ENCODE measurements at regions of chr12 and their contacts with region 1.

Region 1: GRCh38 chr12:54032627-54033100 is at the start of gene HOXC5:
- DNase-seq: peak; percentile 54
- ATAC-seq: peak; percentile 53
- H3K4me3 ChIP-seq: peak within 1 kb of the TSS; percentile 55 to 77
- H3K27ac ChIP-seq: peak within 1 kb of the TSS; percentile 35
- H3K4me1 ChIP-seq: peaks cover 7 to 29% of the 10 kb centered on the region in 2 experiments
- H3K27me3 ChIP-seq: no peaks in the 10 kb centered on the region
- CTCF ChIP-seq: peak; percentile 88 to 98 (median 94)
- POLR2A ChIP-seq: no peak
- RAD21 ChIP-seq: peak; percentile 88
- total RNA-seq, gene HOXC5: 1.1 TPM

Region 2: GRCh38 chr12:54017878-54018467 is 14.7 kb before region 1 on chr12:
- CTCF ChIA-PET with region 1: interaction called, 43 read pairs
- POLR2A ChIA-PET with region 1: interaction called, 3 read pairs
- RAD21 ChIA-PET with region 1: interaction called in 1 of 2 experiments, 3 read pairs
- intact Hi-C with region 1: no loop called
- DNase-seq: peak; percentile 84
- ATAC-seq: peak; percentile 80
- H3K4me3 ChIP-seq: peak overlapping the region; percentile 76 to 88
- H3K27ac ChIP-seq: peak overlapping the region; percentile 94
- H3K4me1 ChIP-seq: peaks cover 24 to 44% of the 10 kb centered on the region in 2 experiments
- H3K27me3 ChIP-seq: no peaks in the 10 kb centered on the region
- CTCF ChIP-seq: no peak
- POLR2A ChIP-seq: peak; percentile 56
- RAD21 ChIP-seq: no peak

Region 3: GRCh38 chr12:54134850-54135249 is 102.2 kb after region 1 on chr12:
- CTCF ChIA-PET with region 1: interaction called, 21 read pairs
- POLR2A ChIA-PET with region 1: no interaction called
- RAD21 ChIA-PET with region 1: interaction called, 9 to 12 read pairs
- intact Hi-C with region 1: loop called (anchors 5 kb)
- DNase-seq: no peak
- ATAC-seq: peak; percentile 59; the same call in 1 of the 2 replicates
- H3K4me3 ChIP-seq: no peak overlapping the region
- H3K27ac ChIP-seq: no peak overlapping the region
- H3K4me1 ChIP-seq: peaks cover 4 to 5% of the 10 kb centered on the region in 2 experiments; a peak in 1 of 4 replicates
- H3K27me3 ChIP-seq: no peaks in the 10 kb centered on the region; the same call in 1 of the 2 replicates
- CTCF ChIP-seq: peak; percentile 26 to 37 (median 28); a peak in 5 of 6 replicates
- POLR2A ChIP-seq: no peak
- RAD21 ChIP-seq: peak; percentile 49

Region 4: GRCh38 chr12:54191550-54192022 is 158.9 kb after region 1 on chr12:
- CTCF ChIA-PET with region 1: interaction called, 38 read pairs
- POLR2A ChIA-PET with region 1: no interaction called
- RAD21 ChIA-PET with region 1: interaction called, 9 read pairs
- intact Hi-C with region 1: no loop called
- DNase-seq: peak; percentile 77
- ATAC-seq: peak; percentile 71
- H3K4me3 ChIP-seq: no peak overlapping the region
- H3K27ac ChIP-seq: no peak overlapping the region
- H3K4me1 ChIP-seq: peaks cover 5 to 33% of the 10 kb centered on the region in 2 experiments
- H3K27me3 ChIP-seq: no peaks in the 10 kb centered on the region
- CTCF ChIP-seq: peak; percentile 80 to 92 (median 90)
- POLR2A ChIP-seq: no peak
- RAD21 ChIP-seq: peak; percentile 89

Region 5: DNA sequence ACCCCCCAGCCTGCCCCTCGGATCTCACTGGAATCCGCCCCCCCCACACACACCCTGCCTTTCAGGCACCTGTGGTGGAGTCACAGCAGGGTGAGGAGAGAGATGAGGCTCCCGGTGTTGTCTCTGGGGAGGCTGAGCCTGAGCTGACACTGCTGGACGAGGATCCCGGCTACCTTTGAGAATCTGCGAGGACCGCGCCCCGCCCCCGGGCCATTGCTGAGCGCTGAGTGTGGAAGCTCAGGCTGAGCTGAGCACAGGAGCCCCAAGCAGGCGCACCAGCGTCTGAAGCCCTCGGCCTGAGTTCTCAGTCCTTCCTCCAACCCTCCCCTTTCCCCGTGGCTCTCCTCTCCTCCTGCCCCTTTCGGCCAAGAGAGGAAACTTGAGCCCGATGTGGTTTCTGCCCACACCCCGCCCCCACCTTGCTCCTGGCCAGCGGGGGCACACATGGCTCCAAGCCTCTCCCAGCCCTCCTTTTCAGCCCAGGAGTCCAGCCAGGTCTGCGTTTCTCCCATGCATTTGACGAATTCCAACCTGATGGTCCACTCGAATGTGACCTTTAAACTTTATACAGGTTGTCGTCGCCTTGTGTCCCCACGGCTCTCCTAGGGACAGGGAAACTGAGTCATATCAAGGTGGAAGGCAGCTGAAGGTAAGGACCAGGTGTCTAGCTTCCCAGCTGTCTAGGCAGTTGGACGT is 268.2 kb after region 1 on chr12 and contains the start of gene NFE2:
- CTCF ChIA-PET with region 1: no interaction called
- POLR2A ChIA-PET with region 1: no interaction called
- RAD21 ChIA-PET with region 1: no interaction called
- intact Hi-C with region 1: no loop called
- DNase-seq: no peak
- ATAC-seq: peak; percentile 90
- H3K4me3 ChIP-seq: peak within 1 kb of the TSS; percentile 31 to 55
- H3K27ac ChIP-seq: peak within 1 kb of the TSS; percentile 39; the same call in 1 of the 2 replicates
- H3K4me1 ChIP-seq: peaks cover 31 to 33% of the 10 kb centered on the region in 2 experiments
- H3K27me3 ChIP-seq: peaks cover 12% of the 10 kb centered on the region; the same call in 1 of the 2 replicates
- CTCF ChIP-seq: no peak
- POLR2A ChIP-seq: no peak
- RAD21 ChIP-seq: no peak
- total RNA-seq, gene NFE2: 1.3 TPM

Measured in HCT116 (cell line).